Mammary epithelial cell (primary cell): ENCODE measurements at regions of chr2 and their contacts with region 1.

Region 1: DNA sequence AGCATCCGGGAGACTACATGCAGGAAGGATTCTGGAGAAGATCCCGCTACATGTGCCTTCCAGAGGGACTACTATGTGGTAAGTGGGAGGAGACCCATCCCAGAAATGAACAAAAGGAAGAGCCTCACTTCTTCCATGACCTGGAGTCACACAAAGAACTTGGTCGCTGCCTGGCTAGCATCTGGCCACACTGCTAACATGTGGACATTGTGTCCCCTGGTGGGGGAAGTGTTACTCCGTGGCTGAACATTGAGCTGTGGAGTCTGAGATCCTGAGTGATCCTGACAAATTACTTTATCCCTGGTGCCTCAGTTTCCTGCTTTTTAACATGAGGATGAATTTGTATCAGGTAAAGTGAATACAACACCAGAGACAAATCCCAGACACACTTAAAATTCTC is 8.4 kb downstream of the SPP2 start:
- DNase-seq: no peak
- H3K4me3 ChIP-seq: no peak overlapping the region
- H3K27ac ChIP-seq: no peak overlapping the region
- H3K4me1 ChIP-seq: no peaks in the 10 kb centered on the region
- H3K27me3 ChIP-seq: no peaks in the 10 kb centered on the region
- CTCF ChIP-seq: no peak

Region 2: GRCh38 chr2:233261819-233262555 is 796.9 kb before region 1 on chr2:
- CTCF ChIA-PET with region 1: no interaction called
- dilution Hi-C with region 1: no loop called
- in situ Hi-C with region 1: no loop called
- intact Hi-C with region 1: no loop called
- DNase-seq: no peak
- H3K4me3 ChIP-seq: no peak overlapping the region
- H3K27ac ChIP-seq: no peak overlapping the region
- H3K4me1 ChIP-seq: no peaks in the 10 kb centered on the region
- H3K27me3 ChIP-seq: no peaks in the 10 kb centered on the region
- CTCF ChIP-seq: no peak

Region 3: GRCh38 chr2:234019888-234020287 is 39.0 kb before region 1 on chr2:
- CTCF ChIA-PET with region 1: no interaction called
- dilution Hi-C with region 1: loop called (anchors 5 kb)
- in situ Hi-C with region 1: no loop called
- intact Hi-C with region 1: no loop called
- DNase-seq: no peak
- H3K4me3 ChIP-seq: no peak overlapping the region
- H3K27ac ChIP-seq: no peak overlapping the region
- H3K4me1 ChIP-seq: no peaks in the 10 kb centered on the region
- H3K27me3 ChIP-seq: no peaks in the 10 kb centered on the region
- CTCF ChIP-seq: no peak